Tibial artery (tissue), 4 donors: ENCODE measurements at regions of chr5 and their contacts with region 1.

Region 1: DNA sequence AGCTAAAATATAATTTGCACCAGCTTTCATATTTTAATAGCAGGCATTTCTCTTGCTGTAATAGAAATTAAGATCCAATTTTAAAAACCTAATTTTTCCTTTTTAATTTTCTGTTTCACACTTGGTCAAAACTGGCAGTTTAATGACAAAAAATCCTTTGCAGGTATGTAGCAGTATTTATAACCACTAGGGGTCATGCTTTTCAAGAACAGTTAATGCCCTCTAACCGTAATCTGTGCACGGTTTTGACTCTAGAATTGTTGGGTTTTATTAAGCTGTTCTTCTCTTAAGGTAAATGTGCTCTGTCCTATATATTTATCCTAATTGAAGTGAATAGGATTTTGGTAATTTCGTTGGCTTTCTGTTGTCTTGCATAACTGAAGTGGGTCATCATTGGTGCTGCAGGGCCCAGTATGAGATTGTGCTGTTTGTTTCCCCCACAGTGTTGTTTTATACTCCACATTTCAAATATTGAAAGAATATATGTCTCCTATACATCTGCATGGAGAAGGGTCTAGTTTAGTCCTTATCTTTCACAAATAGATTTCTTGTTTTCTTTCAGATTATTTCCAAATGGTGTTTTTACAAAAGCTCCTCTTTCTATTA is 107.4 kb downstream of the SCAMP1 start:
- DNase-seq: no peak
- H3K4me3 ChIP-seq: no peak overlapping the region
- H3K27ac ChIP-seq: no peak overlapping the region
- H3K4me1 ChIP-seq: peaks cover 0 to 5% (median 0%) of the 10 kb centered on the region in 4 donors
- H3K27me3 ChIP-seq: no peaks in the 10 kb centered on the region
- CTCF ChIP-seq: peak; percentile 68 to 79

Region 2: DNA sequence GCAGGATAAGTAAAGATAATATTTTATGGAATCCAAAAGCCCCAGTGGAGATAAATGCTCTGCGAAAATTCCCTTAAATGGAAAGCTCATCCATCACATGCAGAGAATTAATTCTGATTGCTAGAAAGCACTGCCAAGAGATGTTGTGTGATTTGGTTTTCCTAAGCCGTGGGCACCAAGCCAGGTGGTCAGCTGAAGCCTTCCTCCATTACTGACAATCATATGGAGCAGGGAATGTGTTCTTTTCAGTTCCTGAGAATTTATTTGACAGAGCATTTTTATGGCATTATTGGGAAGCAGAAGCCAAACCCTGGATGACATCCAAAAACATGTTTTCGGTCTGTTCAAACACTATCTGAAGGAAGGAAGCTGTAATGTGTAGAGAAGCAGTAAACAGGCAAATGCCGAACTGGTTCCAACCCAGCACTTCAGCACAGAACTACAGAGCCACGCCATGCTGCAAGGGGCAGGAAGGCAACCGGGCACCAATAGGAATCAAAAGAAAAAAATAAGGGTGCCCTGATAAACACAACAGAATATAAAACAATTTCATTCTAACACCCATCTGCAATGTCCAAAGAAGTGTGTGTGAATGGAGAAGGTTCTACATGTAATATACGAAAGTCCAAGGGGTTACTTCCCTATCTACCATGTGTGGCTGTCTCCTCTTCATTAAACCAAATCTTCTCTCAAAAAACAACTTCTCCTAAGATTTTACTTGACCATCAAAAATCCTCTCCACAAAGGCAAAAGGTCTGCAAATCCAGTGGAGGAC is 505.0 kb after region 1 on chr5:
- intact Hi-C with region 1: loop called (anchors 10 kb)
- DNase-seq: peak in 1 of 2 donors; percentile 47
- H3K4me3 ChIP-seq: no peak overlapping the region
- H3K27ac ChIP-seq: no peak overlapping the region
- H3K4me1 ChIP-seq: peaks cover 0 to 8% (median 0%) of the 10 kb centered on the region in 4 donors
- H3K27me3 ChIP-seq: no peaks in the 10 kb centered on the region
- CTCF ChIP-seq: no peak